RWPE1 (cell line): ENCODE measurements at regions of chr2 and their contacts with region 1.

Region 1: GRCh38 chr2:171909266-171909665 is 13.0 kb upstream of the HAT1 start:
- DNase-seq: no peak
- H3K27ac ChIP-seq: no peak overlapping the region
- CTCF ChIP-seq: no peak

Region 2: DNA sequence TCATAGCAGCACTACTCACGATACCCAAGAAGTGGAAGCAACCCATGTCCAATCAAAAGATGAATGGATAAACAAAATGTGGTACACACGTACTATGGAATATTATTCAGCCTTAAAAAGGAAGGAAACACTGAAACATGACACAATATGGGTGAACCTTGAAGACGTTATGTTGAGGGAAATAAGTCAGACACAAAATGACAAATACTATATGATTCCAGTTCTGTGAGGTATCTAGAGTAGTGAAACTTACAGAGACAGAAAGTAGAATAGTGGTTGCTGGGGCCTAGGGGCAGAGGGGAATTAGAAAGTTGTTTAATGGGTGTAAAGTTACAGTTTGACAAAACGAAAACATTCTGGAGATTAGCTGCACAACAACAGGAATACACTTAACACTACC is 773.2 kb before region 1 on chr2:
- CTCF ChIA-PET with region 1: no interaction called
- POLR2A ChIA-PET with region 1: interaction called, 16 read pairs
- DNase-seq: no peak
- H3K27ac ChIP-seq: no peak overlapping the region
- CTCF ChIP-seq: no peak